Endothelial cell of umbilical vein (primary cell): ENCODE measurements at regions of chr17 and their contacts with region 1.

Region 1: GRCh38 chr17:10327640-10328039 is 45.2 kb downstream of the MYH13 start:
- DNase-seq: peak; percentile 37
- H3K4me3 ChIP-seq: no peak overlapping the region
- H3K27ac ChIP-seq: no peak overlapping the region
- H3K4me1 ChIP-seq: no peaks in the 10 kb centered on the region
- H3K27me3 ChIP-seq: no peaks in the 10 kb centered on the region
- CTCF ChIP-seq: peak; percentile 75 to 82
- POLR2A ChIP-seq: no peak

Region 2: DNA sequence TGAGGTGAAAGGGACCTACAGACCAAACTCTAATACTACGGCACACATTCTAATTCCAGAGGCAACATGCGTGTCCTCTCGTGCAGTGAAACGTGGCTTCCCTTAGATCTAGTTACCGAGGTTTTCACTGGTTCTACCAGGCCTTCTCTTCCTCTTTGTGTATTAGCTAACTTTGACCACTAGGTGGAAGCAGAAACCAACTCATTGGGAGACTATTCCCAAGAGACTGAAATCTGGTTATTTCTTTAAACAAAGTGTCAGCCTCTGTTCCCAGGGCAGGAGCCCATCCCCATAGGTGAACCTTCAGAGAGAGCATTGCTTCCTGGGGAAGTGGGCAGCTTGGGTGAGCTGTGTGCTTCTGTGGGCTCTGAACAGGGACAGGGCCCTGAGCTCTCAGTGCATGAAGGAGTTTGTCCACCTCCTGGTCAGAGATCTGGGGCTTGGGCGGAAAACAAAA is 402.9 kb before region 1 on chr17:
- CTCF ChIA-PET with region 1: no interaction called
- POLR2A ChIA-PET with region 1: no interaction called
- dilution Hi-C with region 1: no loop called
- intact Hi-C with region 1: loop called (anchors 10 kb)
- DNase-seq: peak; percentile 39
- H3K4me3 ChIP-seq: no peak overlapping the region
- H3K27ac ChIP-seq: no peak overlapping the region
- H3K4me1 ChIP-seq: no peaks in the 10 kb centered on the region
- H3K27me3 ChIP-seq: no peaks in the 10 kb centered on the region
- CTCF ChIP-seq: peak; percentile 57 to 66
- POLR2A ChIP-seq: no peak

Region 3: GRCh38 chr17:10271106-10271562 is 56.5 kb before region 1 on chr17:
- CTCF ChIA-PET with region 1: no interaction called
- POLR2A ChIA-PET with region 1: no interaction called
- dilution Hi-C with region 1: no loop called
- intact Hi-C with region 1: no loop called
- DNase-seq: no peak
- H3K4me3 ChIP-seq: no peak overlapping the region
- H3K27ac ChIP-seq: no peak overlapping the region
- H3K4me1 ChIP-seq: no peaks in the 10 kb centered on the region
- H3K27me3 ChIP-seq: no peaks in the 10 kb centered on the region
- CTCF ChIP-seq: no peak
- POLR2A ChIP-seq: no peak